ENCODE measurements at regions of chr1 and their contacts with region 1.

Region 1: DNA sequence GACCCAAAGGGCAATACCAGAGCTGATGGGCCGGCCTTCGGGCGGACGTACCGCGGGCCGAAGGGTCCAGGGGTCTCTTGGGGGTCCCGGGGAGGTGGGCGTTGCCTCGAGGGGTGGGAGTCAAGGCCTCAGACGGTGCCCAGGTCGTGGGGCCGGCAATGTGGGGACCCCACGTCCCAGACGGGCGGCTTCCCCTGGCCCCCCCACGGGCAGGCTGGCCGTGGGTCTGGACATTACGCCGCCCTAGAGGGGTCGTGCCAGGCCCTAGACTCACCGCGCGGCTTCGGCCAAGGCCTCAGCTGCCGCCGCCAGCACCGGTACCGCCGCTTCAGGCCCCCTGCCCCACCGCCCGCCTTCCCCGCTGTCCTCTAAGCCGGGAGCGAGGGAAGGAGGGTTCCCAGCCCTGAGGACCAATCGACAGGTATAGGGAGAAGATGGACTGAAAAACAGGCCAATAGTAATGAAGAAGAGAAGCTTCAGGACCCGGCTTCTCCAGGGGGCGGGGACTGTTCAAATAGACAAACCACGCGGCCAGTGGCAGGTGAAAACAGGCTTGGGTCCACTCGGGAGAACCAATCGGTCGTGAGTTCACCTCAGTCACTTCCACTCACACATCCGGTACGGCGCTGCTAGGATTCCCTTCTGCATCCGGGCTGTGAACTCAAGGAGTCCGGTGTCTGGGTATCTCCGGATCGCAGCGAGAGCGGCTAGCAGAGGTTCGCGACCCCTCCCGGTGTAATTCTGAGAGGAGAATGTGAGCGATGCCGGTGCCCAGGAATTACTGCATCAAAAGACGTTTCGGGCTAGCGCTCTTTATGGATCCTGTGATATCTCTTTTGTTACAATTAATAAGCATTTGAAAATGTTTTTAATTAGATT is at the start of gene MTOR:
- H3K4me3 Mint-ChIP-seq: peak within 1 kb of the TSS; percentile 93
- H3K27ac Mint-ChIP-seq: peak within 1 kb of the TSS; percentile 82
- H3K4me1 Mint-ChIP-seq: peaks cover 14% of the 10 kb centered on the region
- H3K27me3 Mint-ChIP-seq: no peaks in the 10 kb centered on the region

Region 2: GRCh38 chr1:11272832-11273594 is 10.6 kb after region 1 on chr1 and contains the start of gene UBIAD1:
- intact Hi-C with region 1: loop called (anchors 1 kb)
- H3K4me3 Mint-ChIP-seq: peak within 1 kb of the TSS; percentile 82
- H3K27ac Mint-ChIP-seq: peak within 1 kb of the TSS; percentile 93
- H3K4me1 Mint-ChIP-seq: peaks cover 25% of the 10 kb centered on the region
- H3K27me3 Mint-ChIP-seq: no peaks in the 10 kb centered on the region

Measured in dendritic cell treated with granulocyte-macrophage colony-stimulating factor and Interleukin-4, amounts not matched to agents 40 ng/mL and 50 ng/mL, for 4 days (primary cell).